Activated B cell treated with CpG ODN at 0.5 μM for 24 hours (primary cell): ENCODE measurements at regions of chr14 and their contacts with region 1.

Region 1: DNA sequence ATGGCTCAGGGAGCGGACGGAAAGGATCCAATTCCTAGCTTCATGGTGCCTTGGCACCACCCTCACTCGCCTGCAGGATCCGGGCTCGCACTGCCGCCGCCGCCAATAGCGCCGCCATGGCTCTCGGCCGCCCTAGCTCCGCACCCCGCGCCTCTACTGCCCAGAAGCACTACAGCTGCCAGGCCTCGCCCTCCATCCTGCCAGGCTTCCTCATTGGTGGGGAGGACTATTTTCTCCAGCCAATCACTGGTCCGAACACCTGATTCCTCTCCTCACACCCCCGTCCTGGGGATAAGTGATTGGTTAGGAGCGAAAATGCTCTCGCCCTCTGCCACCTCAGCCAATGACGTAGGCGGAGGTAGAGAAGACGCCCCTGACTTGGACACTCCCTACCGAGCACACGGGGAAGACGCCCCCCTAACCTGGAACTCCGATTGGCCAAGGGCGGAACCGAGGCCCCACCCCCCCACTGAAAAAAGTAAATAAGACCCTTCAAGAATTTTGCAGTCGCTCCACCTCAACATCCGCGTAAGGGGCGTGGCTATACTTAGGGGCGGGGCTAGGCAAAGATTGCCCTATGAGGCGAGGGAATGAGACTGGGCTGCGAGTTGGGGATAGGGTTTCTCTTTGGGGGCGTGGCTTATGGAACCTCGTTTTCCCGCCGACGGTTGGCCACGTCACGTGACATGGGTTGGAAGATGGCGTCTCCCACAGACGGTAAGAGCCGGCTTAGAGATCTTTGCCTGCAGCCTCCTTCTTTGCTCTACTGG is at the starts of genes ALDH6A1 and LIN52:
- DNase-seq: peak; percentile 94
- ATAC-seq: peak; percentile 87
- H3K4me3 Mint-ChIP-seq: peak within 1 kb of the TSS; percentile 99
- H3K27ac Mint-ChIP-seq: peak within 1 kb of the TSS; percentile 93
- H3K4me1 Mint-ChIP-seq: peaks cover 37% of the 10 kb centered on the region
- H3K27me3 Mint-ChIP-seq: no peaks in the 10 kb centered on the region
- CTCF ChIP-seq: no peak
- total RNA-seq, gene ALDH6A1: 9.8 and 11.5 TPM in 2 replicates
- total RNA-seq, gene LIN52: 7.6 and 12.4 TPM in 2 replicates

Region 2: DNA sequence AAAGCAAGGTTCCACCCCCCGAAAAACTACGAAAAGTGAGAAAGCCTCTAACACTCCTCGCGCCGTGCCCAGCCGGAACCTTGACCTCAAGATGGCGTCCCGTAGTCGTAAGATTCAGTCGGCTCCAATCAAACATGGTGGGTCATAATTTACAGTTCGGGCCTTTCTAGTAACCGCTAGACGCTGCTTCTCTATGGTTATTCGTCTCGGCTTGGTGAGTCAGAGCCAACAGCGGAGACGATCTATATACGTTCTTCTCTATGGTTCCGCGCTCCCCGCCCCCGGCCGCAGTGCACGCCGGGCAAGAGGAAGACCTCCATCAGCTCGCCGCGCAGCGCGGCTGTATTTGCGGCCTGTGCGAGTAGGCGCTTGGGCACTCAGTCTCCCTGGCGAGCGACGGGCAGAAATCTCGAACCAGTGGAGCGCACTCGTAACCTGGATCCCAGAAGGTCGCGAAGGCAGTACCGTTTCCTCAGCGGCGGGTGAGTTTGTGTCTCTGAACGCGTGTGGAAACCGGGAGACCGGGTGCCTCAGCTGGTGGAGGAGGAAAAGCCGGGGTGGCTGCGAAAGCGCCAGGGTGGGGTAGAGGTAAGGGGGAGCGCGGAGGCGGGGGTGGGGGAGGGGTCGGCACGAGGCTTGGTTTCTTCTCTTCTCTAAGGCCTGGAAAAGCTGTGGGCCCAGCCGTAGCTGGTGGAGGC is 1026.1 kb before region 1 on chr14 and contains the start of gene RBM25:
- CTCF ChIA-PET with region 1: no interaction called
- POLR2A ChIA-PET with region 1: interaction called, 3 read pairs
- intact Hi-C with region 1: loop called (anchors 1 kb)
- DNase-seq: peak; percentile 90
- ATAC-seq: peak; percentile 93
- H3K4me3 Mint-ChIP-seq: no peak within 1 kb of the TSS
- H3K27ac Mint-ChIP-seq: no peak within 1 kb of the TSS
- H3K4me1 Mint-ChIP-seq: peaks cover 42% of the 10 kb centered on the region
- H3K27me3 Mint-ChIP-seq: no peaks in the 10 kb centered on the region
- CTCF ChIP-seq: no peak
- total RNA-seq, gene RBM25: 114 and 123 TPM in 2 replicates

Region 3: DNA sequence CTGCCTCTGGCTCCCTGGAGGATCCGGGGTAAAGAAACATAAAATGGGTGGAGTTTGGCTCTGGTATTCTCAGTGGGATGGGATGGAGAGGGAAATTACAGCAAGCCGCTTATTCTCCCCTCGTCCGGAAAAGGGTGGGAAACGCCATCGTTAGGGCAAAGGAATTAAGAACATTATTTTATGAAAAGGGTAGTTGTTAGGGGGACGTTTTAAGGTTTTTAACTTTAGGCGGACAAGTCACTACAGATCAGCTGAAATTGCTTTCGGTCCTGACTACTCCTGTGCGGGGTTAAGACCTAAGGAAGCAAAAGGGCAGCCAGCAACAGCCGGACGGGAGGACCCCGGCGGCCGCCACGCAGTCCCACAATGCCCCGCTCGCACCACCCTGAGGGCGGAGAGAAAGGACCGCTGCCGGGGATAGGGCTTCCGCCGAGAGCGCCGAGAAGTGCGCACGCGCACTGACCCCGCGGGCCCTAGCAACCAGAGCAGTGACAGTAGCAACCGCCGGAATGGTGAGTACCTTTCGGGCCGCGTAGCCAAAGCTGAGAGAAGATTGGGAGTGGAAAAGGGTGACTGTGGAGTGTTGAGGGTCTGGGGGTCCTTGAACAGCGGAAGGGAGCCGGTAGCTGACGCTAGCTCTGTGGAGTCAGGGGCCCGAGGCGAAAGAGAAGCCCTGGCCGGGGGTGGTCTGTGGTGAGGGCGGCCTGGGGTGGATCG is 439.8 kb before region 1 on chr14 and contains the start of gene DNAL1:
- CTCF ChIA-PET with region 1: no interaction called
- POLR2A ChIA-PET with region 1: no interaction called
- intact Hi-C with region 1: loop called (anchors 2 kb)
- DNase-seq: peak; percentile 89
- ATAC-seq: peak; percentile 99
- H3K4me3 Mint-ChIP-seq: peak within 1 kb of the TSS; percentile 93
- H3K27ac Mint-ChIP-seq: peak within 1 kb of the TSS; percentile 87
- H3K4me1 Mint-ChIP-seq: peaks cover 14% of the 10 kb centered on the region
- H3K27me3 Mint-ChIP-seq: no peaks in the 10 kb centered on the region
- CTCF ChIP-seq: no peak
- total RNA-seq, gene DNAL1: 7.7 and 7.8 TPM in 2 replicates

Region 4: DNA sequence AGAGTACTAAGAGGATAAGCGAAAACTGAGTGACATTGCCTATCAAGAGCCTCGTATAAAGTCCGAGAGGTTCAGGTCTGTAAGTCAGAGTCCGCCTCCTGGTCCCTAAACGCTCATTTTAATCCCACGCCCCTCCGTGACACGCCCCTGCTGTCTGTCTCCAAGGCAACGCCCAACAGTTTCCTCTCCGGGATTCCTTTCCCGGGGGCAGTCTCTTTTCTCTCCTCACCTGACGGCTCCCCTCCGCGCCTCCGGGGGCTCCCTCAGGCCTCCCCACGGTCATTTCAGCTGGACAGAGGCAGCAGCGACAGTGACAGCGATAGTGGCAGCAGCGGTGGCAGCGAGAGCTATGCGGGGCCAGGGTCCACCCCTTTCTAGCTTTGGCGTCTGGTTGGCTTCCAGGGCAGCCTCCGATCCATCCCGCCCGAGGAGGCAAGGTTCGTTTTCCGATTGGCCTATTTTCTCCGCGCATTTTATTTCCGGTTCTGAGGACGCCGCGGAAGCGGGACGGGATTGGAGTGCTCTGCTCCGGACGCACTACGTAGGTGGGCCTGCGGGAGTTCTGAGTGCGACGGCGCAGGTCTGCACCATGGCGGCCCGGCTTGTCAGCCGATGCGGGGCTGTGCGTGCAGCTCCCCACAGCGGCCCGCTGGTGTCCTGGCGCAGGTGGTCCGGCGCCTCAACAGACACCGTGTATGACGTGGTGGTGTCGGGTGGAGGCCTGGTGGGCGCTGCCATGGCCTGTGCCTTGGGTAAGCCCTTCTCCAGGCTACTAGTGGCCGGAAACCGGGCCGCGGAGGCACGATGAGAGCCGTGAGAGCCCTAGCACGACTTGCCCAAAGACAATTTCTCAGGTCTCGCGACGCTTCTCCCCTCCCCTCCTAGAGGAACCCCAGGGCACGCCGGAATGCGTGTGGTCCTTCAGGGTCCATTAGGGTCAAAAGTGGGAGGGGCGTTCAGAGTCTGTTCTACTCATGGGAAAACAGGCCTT is 134.4 kb before region 1 on chr14 and contains the starts of genes COQ6 and FAM161B:
- CTCF ChIA-PET with region 1: no interaction called
- POLR2A ChIA-PET with region 1: no interaction called
- intact Hi-C with region 1: loop called (anchors 1 kb)
- DNase-seq: peak; percentile 84
- ATAC-seq: peak; percentile 92
- H3K4me3 Mint-ChIP-seq: peak within 1 kb of the TSS; percentile 99
- H3K27ac Mint-ChIP-seq: peak within 1 kb of the TSS; percentile 91
- H3K4me1 Mint-ChIP-seq: peaks cover 17% of the 10 kb centered on the region
- H3K27me3 Mint-ChIP-seq: no peaks in the 10 kb centered on the region
- CTCF ChIP-seq: no peak
- total RNA-seq, gene COQ6: 23.0 and 30.7 TPM in 2 replicates
- total RNA-seq, gene FAM161B: 2.3 TPM in 2 replicates

Region 5: GRCh38 chr14:74135426-74135825 is 51.0 kb after region 1 on chr14:
- CTCF ChIA-PET with region 1: no interaction called
- POLR2A ChIA-PET with region 1: no interaction called
- intact Hi-C with region 1: no loop called
- DNase-seq: no peak
- ATAC-seq: no peak
- H3K4me3 Mint-ChIP-seq: no peak overlapping the region
- H3K27ac Mint-ChIP-seq: no peak overlapping the region
- H3K4me1 Mint-ChIP-seq: peaks cover 16% of the 10 kb centered on the region
- H3K27me3 Mint-ChIP-seq: no peaks in the 10 kb centered on the region
- CTCF ChIP-seq: no peak

Region 6: GRCh38 chr14:74257078-74257989 is 172.9 kb after region 1 on chr14:
- CTCF ChIA-PET with region 1: no interaction called
- POLR2A ChIA-PET with region 1: interaction called, 10 read pairs
- intact Hi-C with region 1: no loop called
- DNase-seq: peak; percentile 63
- ATAC-seq: peak; percentile 97
- H3K4me3 Mint-ChIP-seq: peak overlapping the region; percentile 81
- H3K27ac Mint-ChIP-seq: no peak overlapping the region
- H3K4me1 Mint-ChIP-seq: peaks cover 12% of the 10 kb centered on the region
- H3K27me3 Mint-ChIP-seq: peaks cover 11% of the 10 kb centered on the region
- CTCF ChIP-seq: peak; percentile 70

Region 7: GRCh38 chr14:74493343-74494261 is 409.1 kb after region 1 on chr14 and contains the start of gene ISCA2:
- CTCF ChIA-PET with region 1: no interaction called
- POLR2A ChIA-PET with region 1: no interaction called
- intact Hi-C with region 1: loop called (anchors 1 kb)
- DNase-seq: peak; percentile 98
- ATAC-seq: peak; percentile 90
- H3K4me3 Mint-ChIP-seq: no peak within 1 kb of the TSS
- H3K27ac Mint-ChIP-seq: no peak within 1 kb of the TSS
- H3K4me1 Mint-ChIP-seq: peaks cover 34% of the 10 kb centered on the region
- H3K27me3 Mint-ChIP-seq: no peaks in the 10 kb centered on the region
- CTCF ChIP-seq: no peak
- total RNA-seq, gene ISCA2: 35.0 and 35.3 TPM in 2 replicates